AG04449 (cell line): ENCODE measurements at regions of chr16 and their contacts with region 1.

Region 1: DNA sequence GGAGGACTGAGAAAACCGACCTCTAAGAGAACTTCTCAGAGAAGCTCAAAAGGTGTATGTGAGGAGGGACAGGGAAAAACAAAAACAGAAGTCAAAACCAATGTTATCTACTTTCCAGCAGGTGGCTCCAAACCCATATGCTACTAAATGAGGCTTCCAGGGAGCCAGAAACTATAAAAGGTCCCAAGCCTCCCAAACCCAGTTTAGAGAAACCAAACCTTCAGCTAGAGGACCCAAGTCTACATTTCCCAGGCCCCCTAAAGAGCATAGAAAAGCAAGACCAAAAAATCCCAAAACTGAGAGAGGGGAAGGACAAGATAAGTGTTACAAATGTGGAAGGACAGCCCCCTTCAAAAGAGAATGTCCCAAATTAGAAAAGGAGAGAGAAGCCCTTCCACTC is 3.7 kb downstream of the HPR start:
- DNase-seq: no peak
- H3K4me3 ChIP-seq: no peak overlapping the region
- CTCF ChIP-seq: peak; percentile 44

Region 2: GRCh38 chr16:72093448-72094265 is 26.9 kb after region 1 on chr16 and contains the starts of genes DHX38 and TXNL4B:
- CTCF ChIA-PET with region 1: interaction called, 16 read pairs
- POLR2A ChIA-PET with region 1: no interaction called
- DNase-seq: peak; percentile 95
- H3K4me3 ChIP-seq: peak within 1 kb of the TSS; percentile 100
- CTCF ChIP-seq: no peak

Region 3: DNA sequence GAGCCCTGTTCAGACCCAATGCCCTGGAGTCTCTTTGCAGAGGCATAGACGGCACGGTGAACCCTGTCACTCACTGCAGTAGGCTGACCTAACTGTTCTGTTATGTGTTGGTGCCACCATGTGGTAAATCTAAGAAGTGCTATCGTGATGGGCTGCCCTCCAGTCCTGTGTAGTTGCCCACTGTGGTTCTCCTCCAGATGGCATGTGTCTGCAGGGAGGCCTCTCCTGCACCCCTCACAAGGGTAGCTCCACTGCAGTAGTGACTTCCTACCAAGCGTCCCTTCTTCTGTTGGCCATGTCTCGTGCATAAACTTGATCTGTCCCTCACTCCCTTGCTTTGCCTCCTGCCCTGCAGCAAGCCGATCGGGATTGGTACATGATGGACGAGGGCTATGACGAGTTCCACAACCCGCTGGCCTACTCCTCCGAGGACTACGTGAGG is 32.7 kb after region 1 on chr16:
- CTCF ChIA-PET with region 1: interaction called, 12 read pairs
- POLR2A ChIA-PET with region 1: no interaction called
- DNase-seq: no peak
- H3K4me3 ChIP-seq: no peak overlapping the region
- CTCF ChIP-seq: peak; percentile 61